ENCODE measurements at regions of chr17 and their contacts with region 1.

Region 1: DNA sequence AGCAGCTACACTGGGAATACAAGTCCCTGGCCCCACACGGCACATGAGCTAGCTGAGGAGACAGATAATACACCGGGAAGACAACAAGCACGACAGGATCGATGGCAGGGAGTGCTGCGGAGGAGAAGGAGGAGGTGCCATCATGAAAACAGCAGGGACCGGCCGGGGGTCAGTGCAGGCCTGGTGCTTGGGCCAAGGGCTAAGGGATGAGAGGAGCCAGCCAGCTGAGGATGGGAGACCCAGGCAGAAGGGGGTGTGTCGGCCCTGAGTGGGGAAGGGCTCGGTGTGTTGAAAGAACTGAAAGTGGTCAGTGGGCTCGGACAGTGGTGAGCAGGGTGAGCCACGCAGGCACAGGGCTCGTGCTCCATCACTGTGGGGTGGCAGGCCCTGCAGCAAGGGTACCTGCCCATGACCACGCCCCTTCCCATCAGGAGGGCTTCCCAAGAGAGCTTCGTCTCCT is 50.9 kb upstream of the TNRC6C start:
- DNase-seq: no peak
- ATAC-seq: no peak
- H3K4me3 ChIP-seq: no peak overlapping the region
- H3K27ac ChIP-seq: no peak overlapping the region
- H3K4me1 ChIP-seq: no peaks in the 10 kb centered on the region
- H3K27me3 ChIP-seq: peaks cover 54% of the 10 kb centered on the region
- CTCF ChIP-seq: no peak
- POLR2A ChIP-seq: no peak
- RAD21 ChIP-seq: no peak

Region 2: DNA sequence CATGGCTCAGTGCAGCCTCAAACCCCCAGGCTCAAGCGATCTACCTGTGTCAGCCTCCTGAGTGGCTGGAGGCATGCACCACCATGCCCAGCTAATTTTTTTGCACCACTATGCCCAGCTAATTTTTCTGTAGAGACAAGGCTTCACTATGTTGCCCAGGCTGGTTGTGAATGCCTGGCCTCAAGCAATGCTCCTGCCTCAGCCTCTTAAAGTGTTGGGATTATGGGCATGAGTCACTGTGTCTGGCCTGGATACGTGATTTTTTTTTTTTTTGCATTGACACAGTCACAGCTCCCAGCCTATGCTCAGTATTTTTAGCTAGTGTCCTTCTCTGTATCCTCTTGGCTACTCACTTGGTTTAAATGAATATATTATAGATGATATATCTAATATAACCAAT is 326.1 kb before region 1 on chr17:
- CTCF ChIA-PET with region 1: no interaction called
- POLR2A ChIA-PET with region 1: interaction called, 19 read pairs
- dilution Hi-C with region 1: no loop called
- in situ Hi-C with region 1: no loop called
- intact Hi-C with region 1: no loop called
- DNase-seq: peak; percentile 35
- ATAC-seq: peak; percentile 70
- H3K4me3 ChIP-seq: no peak overlapping the region
- H3K27ac ChIP-seq: no peak overlapping the region
- H3K4me1 ChIP-seq: no peaks in the 10 kb centered on the region
- H3K27me3 ChIP-seq: peaks cover 13% of the 10 kb centered on the region
- CTCF ChIP-seq: no peak
- POLR2A ChIP-seq: no peak
- RAD21 ChIP-seq: no peak

Measured in IMR-90 (cell line).